Activated CD4-positive, alpha-beta memory T cell treated with anti-CD3 and anti-CD28 coated beads for 36 hours (primary cell): ENCODE measurements at regions of chr7 and their contacts with region 1.

Region 1: DNA sequence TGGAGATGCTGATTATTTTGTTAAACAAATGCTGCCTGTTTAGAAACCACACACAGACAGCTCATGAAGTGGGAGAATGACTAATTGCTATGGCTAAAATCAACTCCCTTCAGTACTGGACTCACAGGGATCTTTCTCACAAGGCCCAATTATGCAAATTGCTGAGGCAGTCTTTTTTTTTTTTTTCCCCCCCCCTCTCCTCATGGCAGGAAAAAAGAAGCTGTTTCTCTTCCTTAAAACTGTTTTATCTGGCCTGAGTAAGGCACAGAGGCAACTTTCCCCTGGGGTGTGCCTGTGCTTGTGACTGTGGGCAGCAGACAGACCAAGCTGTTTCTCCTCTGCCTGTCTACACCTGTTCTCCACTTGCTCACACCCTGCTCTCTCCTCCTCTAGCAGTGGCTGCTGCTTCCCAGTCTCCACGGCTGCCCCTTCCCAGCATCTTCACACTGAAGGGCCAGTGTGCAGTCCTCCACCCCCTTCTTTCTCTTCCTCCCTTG is 65.4 kb upstream of the STEAP1B start:
- DNase-seq: no peak
- H3K4me3 Mint-ChIP-seq: no peak overlapping the region
- H3K27ac Mint-ChIP-seq: no peak overlapping the region
- H3K4me1 Mint-ChIP-seq: peaks cover 51% of the 10 kb centered on the region
- H3K27me3 Mint-ChIP-seq: peaks cover 39% of the 10 kb centered on the region

Region 2: GRCh38 chr7:22586786-22587140 is 21.4 kb after region 1 on chr7:
- CTCF ChIA-PET with region 1: interaction called, 9 read pairs
- POLR2A ChIA-PET with region 1: interaction called, 3 read pairs
- intact Hi-C with region 1: loop called (anchors 1 kb)
- DNase-seq: no peak
- H3K4me3 Mint-ChIP-seq: no peak overlapping the region
- H3K27ac Mint-ChIP-seq: no peak overlapping the region
- H3K4me1 Mint-ChIP-seq: peaks cover 16% of the 10 kb centered on the region
- H3K27me3 Mint-ChIP-seq: peaks cover 21% of the 10 kb centered on the region

Region 3: GRCh38 chr7:22640269-22640668 is 74.9 kb after region 1 on chr7:
- CTCF ChIA-PET with region 1: interaction called, 10 read pairs
- POLR2A ChIA-PET with region 1: interaction called, 4 read pairs
- intact Hi-C with region 1: loop called (anchors 1 kb)
- DNase-seq: peak; percentile 78
- H3K4me3 Mint-ChIP-seq: no peak overlapping the region
- H3K27ac Mint-ChIP-seq: no peak overlapping the region
- H3K4me1 Mint-ChIP-seq: peaks cover 20% of the 10 kb centered on the region
- H3K27me3 Mint-ChIP-seq: peaks cover 26% of the 10 kb centered on the region

Region 4: DNA sequence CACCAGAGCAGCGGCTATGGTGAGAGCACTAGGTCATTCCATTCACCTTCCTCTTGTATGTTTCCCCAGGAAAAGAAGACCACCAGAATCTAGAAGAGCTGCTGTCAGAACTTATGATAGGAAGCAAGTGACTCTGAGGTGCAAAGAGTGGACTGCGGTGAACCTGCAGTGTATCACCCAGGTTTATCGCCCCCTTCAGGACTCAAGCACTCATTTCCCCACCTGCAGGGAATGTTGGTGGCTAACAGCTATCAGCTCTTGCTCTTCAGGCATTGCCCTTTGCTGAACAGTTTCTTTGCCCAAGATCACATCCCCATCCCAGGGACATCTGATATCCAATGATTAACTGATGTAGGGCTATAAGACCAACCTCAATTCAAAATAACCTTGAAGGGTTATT is 95.4 kb after region 1 on chr7:
- CTCF ChIA-PET with region 1: interaction called, 7 read pairs
- POLR2A ChIA-PET with region 1: interaction called, 6 read pairs
- intact Hi-C with region 1: loop called (anchors 1 kb)
- DNase-seq: no peak
- H3K4me3 Mint-ChIP-seq: no peak overlapping the region
- H3K27ac Mint-ChIP-seq: no peak overlapping the region
- H3K4me1 Mint-ChIP-seq: peaks cover 26% of the 10 kb centered on the region
- H3K27me3 Mint-ChIP-seq: peaks cover 15% of the 10 kb centered on the region

Region 5: DNA sequence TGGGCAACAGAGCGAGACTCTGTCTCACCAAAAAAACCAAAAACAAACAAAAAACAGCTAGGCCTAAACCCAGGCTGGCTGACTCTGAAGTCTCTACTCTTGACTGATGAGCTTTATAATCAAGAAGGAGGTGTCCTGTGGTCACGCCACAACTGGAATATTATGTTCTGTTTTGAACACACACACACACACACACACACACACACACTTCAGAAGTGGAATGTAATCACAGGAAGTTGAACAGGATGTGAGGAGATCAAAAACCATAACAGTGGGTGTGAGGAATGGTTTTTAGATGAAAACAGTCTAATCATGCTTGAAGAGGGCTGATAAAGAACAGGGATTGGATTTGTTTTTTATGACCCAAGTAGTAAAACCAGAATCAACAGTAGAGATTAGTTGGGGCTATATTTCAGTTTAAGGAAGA is 110.6 kb after region 1 on chr7:
- CTCF ChIA-PET with region 1: interaction called, 13 read pairs
- POLR2A ChIA-PET with region 1: interaction called, 3 read pairs
- intact Hi-C with region 1: loop called (anchors 1 kb)
- DNase-seq: peak; percentile 61
- H3K4me3 Mint-ChIP-seq: no peak overlapping the region
- H3K27ac Mint-ChIP-seq: peak overlapping the region; percentile 47
- H3K4me1 Mint-ChIP-seq: peaks cover 75% of the 10 kb centered on the region
- H3K27me3 Mint-ChIP-seq: no peaks in the 10 kb centered on the region

Region 6: GRCh38 chr7:22697876-22698606 is 132.7 kb after region 1 on chr7:
- CTCF ChIA-PET with region 1: interaction called, 18 read pairs
- POLR2A ChIA-PET with region 1: interaction called, 3 read pairs
- intact Hi-C with region 1: loop called (anchors 1 kb)
- DNase-seq: peak; percentile 36
- H3K4me3 Mint-ChIP-seq: peak overlapping the region; percentile 13
- H3K27ac Mint-ChIP-seq: peak overlapping the region; percentile 85
- H3K4me1 Mint-ChIP-seq: peaks cover 66% of the 10 kb centered on the region
- H3K27me3 Mint-ChIP-seq: peaks cover 2% of the 10 kb centered on the region